Heart right ventricle (tissue), 16 donors: ENCODE measurements at regions of chr9 and their contacts with region 1.

Region 1: GRCh38 chr9:3857673-3858072 is 331.9 kb upstream of the RFX3 start:
- DNase-seq: no peak
- ATAC-seq: no peak
- H3K4me3 ChIP-seq: no peak overlapping the region
- H3K27ac ChIP-seq: no peak overlapping the region
- H3K4me1 ChIP-seq: no peaks in the 10 kb centered on the region
- H3K27me3 ChIP-seq: no peaks in the 10 kb centered on the region
- CTCF ChIP-seq: no peak

Region 2: GRCh38 chr9:3828250-3828908 is 29.3 kb before region 1 on chr9:
- intact Hi-C with region 1: loop called in 1 of 10 experiments (anchors 1 kb)
- DNase-seq: no peak
- ATAC-seq: no peak
- H3K4me3 ChIP-seq: no peak overlapping the region
- H3K27ac ChIP-seq: no peak overlapping the region
- H3K4me1 ChIP-seq: no peaks in the 10 kb centered on the region
- H3K27me3 ChIP-seq: no peaks in the 10 kb centered on the region
- CTCF ChIP-seq: no peak